ENCODE measurements at regions of chrX and their contacts with region 1.

Region 1: GRCh38 chrX:153947009-153947769 is 2.7 kb upstream of the RENBP start:
- DNase-seq: peak; percentile 58 to 83 (median 78)
- ATAC-seq: peak; percentile 93
- H3K4me3 ChIP-seq: no peak overlapping the region
- H3K4me3 Mint-ChIP-seq: peak overlapping the region; percentile 0 to 69 (median 32)
- H3K27ac ChIP-seq: no peak overlapping the region
- H3K27ac Mint-ChIP-seq: peak overlapping the region; percentile 26 to 94 (median 87)
- H3K4me1 ChIP-seq: peaks cover 3 to 9% of the 10 kb centered on the region in 2 donors
- H3K4me1 Mint-ChIP-seq: peaks cover 6 to 30% (median 20%) of the 10 kb centered on the region in 7 donors
- H3K27me3 ChIP-seq: no peaks in the 10 kb centered on the region
- H3K27me3 Mint-ChIP-seq: no peaks in the 10 kb centered on the region

Region 2: DNA sequence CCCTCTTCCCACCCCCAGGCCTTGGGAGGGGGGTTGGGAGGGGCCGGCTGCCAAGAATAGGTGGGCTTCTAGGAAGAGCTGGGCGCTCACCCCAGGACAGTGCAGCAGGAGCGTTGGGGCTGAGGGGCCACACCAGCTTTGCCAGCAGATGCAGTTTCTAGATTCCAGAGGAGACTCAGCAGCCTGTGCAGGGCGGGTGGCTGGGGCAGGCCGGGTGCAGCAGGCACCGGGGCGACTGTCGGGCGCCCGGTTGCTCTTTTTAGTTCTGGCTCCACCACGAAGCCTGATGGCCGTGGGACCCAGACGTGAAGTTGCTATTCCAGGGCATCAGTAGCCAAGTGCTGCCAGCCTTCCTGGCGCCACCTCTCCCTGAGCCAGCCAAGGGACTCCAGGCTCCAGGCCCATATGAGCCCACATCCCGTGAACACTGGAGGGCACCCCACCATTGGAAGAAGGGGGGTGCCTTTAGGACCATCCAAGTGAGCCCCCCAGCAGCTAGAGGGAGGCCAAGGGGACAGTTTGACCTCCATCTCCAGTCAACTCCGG is 146.9 kb before region 1 on chrX:
- CTCF ChIA-PET with region 1: no interaction called
- POLR2A ChIA-PET with region 1: no interaction called
- intact Hi-C with region 1: no loop called
- DNase-seq: no peak
- ATAC-seq: no peak
- H3K4me3 ChIP-seq: no peak overlapping the region
- H3K4me3 Mint-ChIP-seq: no peak overlapping the region
- H3K27ac ChIP-seq: no peak overlapping the region
- H3K27ac Mint-ChIP-seq: no peak overlapping the region
- H3K4me1 ChIP-seq: no peaks in the 10 kb centered on the region
- H3K4me1 Mint-ChIP-seq: peaks cover 0 to 20% (median 9%) of the 10 kb centered on the region in 7 donors
- H3K27me3 ChIP-seq: no peaks in the 10 kb centered on the region
- H3K27me3 Mint-ChIP-seq: no peaks in the 10 kb centered on the region

Region 3: GRCh38 chrX:153909024-153909970 is 37.9 kb before region 1 on chrX:
- CTCF ChIA-PET with region 1: interaction called, 5 read pairs
- POLR2A ChIA-PET with region 1: interaction called, 3 read pairs
- intact Hi-C with region 1: loop called in 1 of 2 experiments (anchors 5 kb)
- DNase-seq: no peak
- ATAC-seq: no peak
- H3K4me3 ChIP-seq: no peak overlapping the region
- H3K4me3 Mint-ChIP-seq: no peak overlapping the region
- H3K27ac ChIP-seq: peak overlapping the region; percentile 35
- H3K27ac Mint-ChIP-seq: peak overlapping the region in 1 of 9 donors; percentile 17
- H3K4me1 ChIP-seq: peaks cover 11 to 12% of the 10 kb centered on the region in 2 donors
- H3K4me1 Mint-ChIP-seq: peaks cover 0 to 21% (median 11%) of the 10 kb centered on the region in 7 donors
- H3K27me3 ChIP-seq: no peaks in the 10 kb centered on the region
- H3K27me3 Mint-ChIP-seq: no peaks in the 10 kb centered on the region

Region 4: GRCh38 chrX:153934473-153935325 is 12.5 kb before region 1 on chrX and contains the start of gene NAA10:
- CTCF ChIA-PET with region 1: interaction called, 168 read pairs
- POLR2A ChIA-PET with region 1: interaction called, 384 read pairs
- intact Hi-C with region 1: loop called in 1 of 2 experiments (anchors 1 kb)
- DNase-seq: peak in 7 of 9 donors; percentile 19 to 76 (median 34)
- ATAC-seq: peak; percentile 92
- H3K4me3 ChIP-seq: peak within 1 kb of the TSS; percentile 39
- H3K4me3 Mint-ChIP-seq: peak within 1 kb of the TSS; percentile 80 to 90 (median 87)
- H3K27ac ChIP-seq: peak within 1 kb of the TSS; percentile 60
- H3K27ac Mint-ChIP-seq: peak within 1 kb of the TSS; percentile 62 to 90 (median 83)
- H3K4me1 ChIP-seq: no peaks in the 10 kb centered on the region
- H3K4me1 Mint-ChIP-seq: peaks cover 0 to 34% (median 17%) of the 10 kb centered on the region in 7 donors
- H3K27me3 ChIP-seq: no peaks in the 10 kb centered on the region
- H3K27me3 Mint-ChIP-seq: no peaks in the 10 kb centered on the region
- total RNA-seq, gene NAA10: 45.2 to 79.7 (median 75.6) TPM